GM12878 (cell line): ENCODE measurements at regions of chr3 and their contacts with region 1.

Region 1: DNA sequence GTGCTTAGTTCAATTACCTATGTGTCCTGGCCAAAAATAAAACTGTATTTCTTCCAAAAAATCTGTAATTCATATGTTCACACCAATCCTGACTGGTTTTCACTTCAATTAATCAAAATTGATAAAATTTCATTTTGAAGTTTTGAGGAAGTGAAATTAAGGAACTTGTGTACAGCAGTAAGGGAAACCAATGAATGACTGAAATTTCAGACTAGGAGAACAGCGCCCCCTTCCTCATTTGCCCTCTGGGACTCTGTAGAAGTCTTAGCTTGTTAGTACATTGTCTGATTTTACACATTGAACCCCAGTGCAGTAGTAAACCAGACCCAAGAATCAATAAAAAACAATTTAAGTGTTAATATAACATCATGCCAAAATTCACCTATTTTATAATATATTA is 495.3 kb upstream of the AGTR1 start:
- DNase-seq: no peak
- ATAC-seq: peak; percentile 57
- H3K4me3 ChIP-seq: no peak overlapping the region
- H3K27ac ChIP-seq: no peak overlapping the region
- H3K4me1 ChIP-seq: no peaks in the 10 kb centered on the region
- H3K27me3 ChIP-seq: no peaks in the 10 kb centered on the region
- CTCF ChIP-seq: peak in 2 of 3 experiments; percentile 16 to 18; a peak in 1 of 6 replicates
- EP300 ChIP-seq: no peak
- POLR2A ChIP-seq: no peak
- RAD21 ChIP-seq: no peak

Region 2: DNA sequence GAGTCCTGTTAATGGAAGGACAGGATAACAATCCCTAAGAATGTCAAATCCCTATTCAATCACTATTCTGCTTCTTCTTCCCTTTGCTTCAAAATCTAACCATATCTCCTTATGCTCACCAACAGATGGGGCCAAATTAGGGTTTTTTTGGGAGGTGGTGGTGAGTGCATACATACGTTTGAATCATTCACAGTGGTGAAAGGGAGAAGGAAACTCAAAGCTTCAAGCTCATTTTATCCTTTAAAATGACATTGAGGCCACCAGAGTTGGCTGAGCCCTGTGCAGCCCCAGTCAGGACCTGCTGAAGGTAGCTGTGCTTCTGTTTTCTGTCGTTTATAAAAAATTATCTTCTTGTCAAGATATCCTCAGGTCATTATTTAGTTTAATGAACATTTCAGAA is 112.2 kb before region 1 on chr3:
- CTCF ChIA-PET with region 1: no interaction called
- POLR2A ChIA-PET with region 1: no interaction called
- RAD21 ChIA-PET with region 1: no interaction called
- SMC1A ChIA-PET with region 1: no interaction called
- in situ Hi-C with region 1: no loop called
- intact Hi-C with region 1: no loop called
- DNase-seq: no peak
- ATAC-seq: no peak
- H3K4me3 ChIP-seq: no peak overlapping the region
- H3K27ac ChIP-seq: no peak overlapping the region
- H3K4me1 ChIP-seq: no peaks in the 10 kb centered on the region
- H3K27me3 ChIP-seq: no peaks in the 10 kb centered on the region
- CTCF ChIP-seq: no peak
- EP300 ChIP-seq: no peak
- POLR2A ChIP-seq: no peak
- RAD21 ChIP-seq: no peak

Region 3: GRCh38 chr3:148214705-148215104 is 12.3 kb after region 1 on chr3:
- CTCF ChIA-PET with region 1: interaction called, 11 read pairs
- POLR2A ChIA-PET with region 1: interaction called, 3 read pairs
- RAD21 ChIA-PET with region 1: interaction called, 3 read pairs
- SMC1A ChIA-PET with region 1: interaction called, 8 read pairs
- in situ Hi-C with region 1: no loop called
- intact Hi-C with region 1: no loop called
- DNase-seq: no peak
- ATAC-seq: no peak
- H3K4me3 ChIP-seq: no peak overlapping the region
- H3K27ac ChIP-seq: no peak overlapping the region
- H3K4me1 ChIP-seq: no peaks in the 10 kb centered on the region
- H3K27me3 ChIP-seq: no peaks in the 10 kb centered on the region
- CTCF ChIP-seq: no peak
- EP300 ChIP-seq: no peak
- POLR2A ChIP-seq: no peak
- RAD21 ChIP-seq: no peak

Region 4: GRCh38 chr3:148246291-148246923 is 44.0 kb after region 1 on chr3:
- CTCF ChIA-PET with region 1: no interaction called
- POLR2A ChIA-PET with region 1: no interaction called
- RAD21 ChIA-PET with region 1: no interaction called
- SMC1A ChIA-PET with region 1: no interaction called
- in situ Hi-C with region 1: no loop called
- intact Hi-C with region 1: no loop called
- DNase-seq: no peak
- ATAC-seq: no peak
- H3K4me3 ChIP-seq: no peak overlapping the region
- H3K27ac ChIP-seq: no peak overlapping the region
- H3K4me1 ChIP-seq: no peaks in the 10 kb centered on the region
- H3K27me3 ChIP-seq: no peaks in the 10 kb centered on the region
- CTCF ChIP-seq: no peak
- EP300 ChIP-seq: no peak
- POLR2A ChIP-seq: no peak
- RAD21 ChIP-seq: no peak